ENCODE measurements at regions of chr11 and their contacts with region 1.

Region 1: DNA sequence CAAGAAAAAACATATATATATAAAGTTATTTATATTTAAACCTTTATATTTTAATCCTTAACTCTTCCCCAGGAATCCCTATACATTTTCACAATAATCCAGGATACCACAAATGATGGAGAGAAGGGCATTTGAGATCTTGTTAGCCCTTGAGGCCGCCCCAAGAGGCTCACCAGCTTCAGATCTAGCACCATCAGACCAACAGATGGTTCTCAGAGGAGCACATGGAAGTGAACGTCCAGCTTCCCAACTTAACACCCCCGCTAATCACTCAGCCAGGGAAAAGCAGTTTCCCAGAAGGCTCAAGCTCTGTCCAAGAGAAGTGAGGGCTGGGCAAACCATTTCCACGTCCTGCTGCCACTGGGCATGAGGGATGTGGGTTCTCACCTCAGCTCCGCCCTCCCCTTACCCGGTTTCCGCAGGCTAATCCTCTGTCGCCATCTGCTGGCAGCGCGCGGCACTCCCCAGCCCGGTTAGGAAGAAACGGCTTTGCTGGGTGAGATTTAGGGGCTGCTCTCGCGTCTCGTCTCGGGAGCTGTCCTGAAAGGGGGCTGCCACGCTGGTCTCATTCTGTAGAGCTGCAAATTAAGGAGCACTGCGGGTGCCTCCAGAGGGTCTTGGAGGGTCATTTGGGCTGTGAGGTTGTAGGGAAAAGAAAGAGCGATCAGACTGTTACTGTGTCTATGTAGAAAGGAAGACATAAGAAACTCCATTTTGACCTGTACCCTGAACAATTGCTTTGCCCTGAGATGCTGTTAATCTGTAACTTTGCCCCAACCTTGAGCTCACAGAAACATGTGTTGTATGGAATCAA is 6.8 kb upstream of the FAM111A start:
- DNase-seq: peak; percentile 82 to 88 (median 83)
- H3K4me3 ChIP-seq: no peak overlapping the region
- H3K4me3 Mint-ChIP-seq: peak overlapping the region in 7 of 8 donors; percentile 18 to 87 (median 68)
- H3K27ac ChIP-seq: no peak overlapping the region
- H3K27ac Mint-ChIP-seq: peak overlapping the region; percentile 5 to 92 (median 88)
- H3K4me1 ChIP-seq: peaks cover 8% of the 10 kb centered on the region
- H3K4me1 Mint-ChIP-seq: peaks cover 7 to 12% (median 8%) of the 10 kb centered on the region in 4 donors
- H3K27me3 ChIP-seq: no peaks in the 10 kb centered on the region
- H3K27me3 Mint-ChIP-seq: no peaks in the 10 kb centered on the region

Region 2: DNA sequence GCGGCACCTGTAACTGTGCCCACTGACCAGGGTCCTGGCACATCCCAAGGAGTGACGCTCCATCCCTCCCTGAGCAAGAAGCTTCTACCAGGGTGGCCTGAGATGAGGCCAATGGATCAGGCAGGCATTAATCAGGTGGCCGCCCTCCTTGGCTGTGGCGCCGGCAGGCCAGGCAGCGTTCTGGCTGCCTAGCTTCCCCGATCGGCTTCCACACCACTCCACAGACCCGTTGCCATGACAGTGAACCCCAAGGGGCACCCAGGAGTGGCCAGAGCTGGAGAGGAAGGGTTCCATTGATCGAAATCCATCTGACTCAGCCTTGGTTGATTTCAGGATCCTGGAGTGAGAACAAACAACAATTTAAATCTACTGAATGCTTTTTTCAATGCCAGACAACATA is 1933.6 kb before region 1 on chr11:
- CTCF ChIA-PET with region 1: no interaction called
- POLR2A ChIA-PET with region 1: no interaction called
- intact Hi-C with region 1: no loop called
- DNase-seq: no peak
- H3K4me3 ChIP-seq: no peak overlapping the region
- H3K4me3 Mint-ChIP-seq: no peak overlapping the region
- H3K27ac ChIP-seq: no peak overlapping the region
- H3K27ac Mint-ChIP-seq: no peak overlapping the region
- H3K4me1 ChIP-seq: no peaks in the 10 kb centered on the region
- H3K4me1 Mint-ChIP-seq: peaks cover 0 to 1% (median 0%) of the 10 kb centered on the region in 4 donors
- H3K27me3 ChIP-seq: no peaks in the 10 kb centered on the region
- H3K27me3 Mint-ChIP-seq: peaks cover 14% of the 10 kb centered on the region in 2 donors

Region 3: DNA sequence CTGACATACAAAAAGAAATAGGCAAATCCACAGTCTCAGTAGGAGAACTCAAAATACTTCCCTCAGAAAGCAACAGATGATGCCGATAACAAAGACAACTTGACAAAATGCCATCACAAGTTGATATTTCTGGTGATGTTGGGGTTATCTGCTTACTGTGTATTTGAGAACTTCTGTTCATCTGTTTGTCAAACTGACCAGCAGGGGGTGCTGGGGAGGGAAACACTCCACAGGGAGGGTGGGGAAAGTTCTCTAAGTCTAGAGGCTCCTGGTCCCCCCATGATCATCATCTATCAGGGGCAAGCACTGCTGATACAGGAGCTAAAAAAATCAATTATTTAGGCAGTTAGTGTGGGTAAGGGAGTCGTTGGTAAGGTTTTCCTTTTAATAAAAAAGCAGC is 177.4 kb before region 1 on chr11:
- CTCF ChIA-PET with region 1: no interaction called
- POLR2A ChIA-PET with region 1: no interaction called
- intact Hi-C with region 1: loop called (anchors 5 kb)
- DNase-seq: peak in 3 of 5 donors; percentile 3 to 7 (median 5)
- H3K4me3 ChIP-seq: no peak overlapping the region
- H3K4me3 Mint-ChIP-seq: no peak overlapping the region
- H3K27ac ChIP-seq: no peak overlapping the region
- H3K27ac Mint-ChIP-seq: no peak overlapping the region
- H3K4me1 ChIP-seq: no peaks in the 10 kb centered on the region
- H3K4me1 Mint-ChIP-seq: no peaks in the 10 kb centered on the region
- H3K27me3 ChIP-seq: no peaks in the 10 kb centered on the region
- H3K27me3 Mint-ChIP-seq: peaks cover 7 to 13% of the 10 kb centered on the region in 2 donors

Region 4: GRCh38 chr11:59097113-59097708 is 38.6 kb before region 1 on chr11:
- CTCF ChIA-PET with region 1: interaction called, 42 read pairs
- POLR2A ChIA-PET with region 1: no interaction called
- intact Hi-C with region 1: loop called (anchors 1 kb)
- DNase-seq: peak; percentile 61 to 67 (median 63)
- H3K4me3 ChIP-seq: no peak overlapping the region
- H3K4me3 Mint-ChIP-seq: no peak overlapping the region
- H3K27ac ChIP-seq: no peak overlapping the region
- H3K27ac Mint-ChIP-seq: no peak overlapping the region
- H3K4me1 ChIP-seq: no peaks in the 10 kb centered on the region
- H3K4me1 Mint-ChIP-seq: peaks cover 2 to 10% (median 8%) of the 10 kb centered on the region in 4 donors
- H3K27me3 ChIP-seq: no peaks in the 10 kb centered on the region
- H3K27me3 Mint-ChIP-seq: peaks cover 8 to 15% of the 10 kb centered on the region in 2 donors

Region 5: GRCh38 chr11:59117774-59118173 is 18.1 kb before region 1 on chr11:
- CTCF ChIA-PET with region 1: interaction called, 12 read pairs
- POLR2A ChIA-PET with region 1: no interaction called
- intact Hi-C with region 1: no loop called
- DNase-seq: no peak
- H3K4me3 ChIP-seq: no peak overlapping the region
- H3K4me3 Mint-ChIP-seq: no peak overlapping the region
- H3K27ac ChIP-seq: no peak overlapping the region
- H3K27ac Mint-ChIP-seq: peak overlapping the region in 1 of 7 donors; percentile 40
- H3K4me1 ChIP-seq: no peaks in the 10 kb centered on the region
- H3K4me1 Mint-ChIP-seq: no peaks in the 10 kb centered on the region
- H3K27me3 ChIP-seq: no peaks in the 10 kb centered on the region
- H3K27me3 Mint-ChIP-seq: no peaks in the 10 kb centered on the region